Heart right ventricle (tissue), 16 donors: ENCODE measurements at regions of chr1 and their contacts with region 1.

Region 1: GRCh38 chr1:32063261-32063681 is 9.5 kb upstream of the TMEM39B start:
- DNase-seq: no peak
- ATAC-seq: peak; percentile 5 to 53 (median 44)
- H3K4me3 ChIP-seq: no peak overlapping the region
- H3K27ac ChIP-seq: peak overlapping the region in 6 of 10 donors; percentile 33 to 73 (median 52)
- H3K4me1 ChIP-seq: peaks cover 8 to 32% (median 28%) of the 10 kb centered on the region in 9 donors
- H3K27me3 ChIP-seq: no peaks in the 10 kb centered on the region
- CTCF ChIP-seq: peak in 8 of 9 donors; percentile 49 to 71 (median 60)

Region 2: DNA sequence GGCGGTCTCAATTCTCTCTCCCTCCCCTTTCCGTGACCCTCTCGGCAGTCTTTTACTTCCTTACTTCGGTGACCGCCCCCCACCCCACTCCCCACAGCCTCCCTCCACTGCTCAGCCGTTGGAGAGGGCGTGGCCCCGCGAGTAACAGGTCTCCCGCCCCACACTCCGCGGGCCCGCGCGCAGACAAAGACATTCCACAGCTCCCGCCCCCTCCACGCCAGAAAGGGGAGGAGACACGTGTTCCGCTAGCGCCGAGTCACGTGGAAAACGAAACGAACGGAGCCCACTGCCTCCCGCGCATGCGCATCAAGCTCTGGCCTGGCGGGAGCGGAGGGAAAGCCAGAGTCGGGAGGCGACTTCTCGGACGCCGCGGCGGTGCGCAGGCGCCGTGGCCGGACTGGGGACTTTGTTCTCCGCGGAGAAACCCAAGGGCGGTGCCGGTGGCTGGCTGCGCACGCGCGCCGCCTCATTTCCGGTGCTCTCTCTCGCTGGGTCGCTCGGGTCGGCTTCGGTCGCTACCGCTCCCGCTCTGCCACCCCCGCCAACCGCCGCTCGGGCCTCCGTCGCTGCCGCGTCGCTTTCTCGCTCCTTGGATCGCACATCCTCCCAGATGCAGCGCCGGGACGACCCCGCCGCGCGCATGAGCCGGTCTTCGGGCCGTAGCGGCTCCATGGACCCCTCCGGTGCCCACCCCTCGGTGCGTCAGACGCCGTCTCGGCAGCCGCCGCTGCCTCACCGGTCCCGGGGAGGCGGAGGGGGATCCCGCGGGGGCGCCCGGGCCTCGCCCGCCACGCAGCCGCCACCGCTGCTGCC is 49.7 kb before region 1 on chr1 and contains the start of gene KHDRBS1:
- intact Hi-C with region 1: loop called in 2 of 10 experiments (anchors 10 kb)
- DNase-seq: peak; percentile 99
- ATAC-seq: peak; percentile 95 to 98 (median 96)
- H3K4me3 ChIP-seq: peak within 1 kb of the TSS; percentile 76 to 100 (median 96)
- H3K27ac ChIP-seq: peak within 1 kb of the TSS; percentile 93 to 100 (median 100)
- H3K4me1 ChIP-seq: peaks cover 0 to 50% (median 45%) of the 10 kb centered on the region in 9 donors
- H3K27me3 ChIP-seq: no peaks in the 10 kb centered on the region
- CTCF ChIP-seq: no peak
- total RNA-seq, gene KHDRBS1: 64.6 to 78.3 (median 67.1) TPM